K562 (cell line): ENCODE measurements at regions of chr3 and their contacts with region 1.

Region 1: DNA sequence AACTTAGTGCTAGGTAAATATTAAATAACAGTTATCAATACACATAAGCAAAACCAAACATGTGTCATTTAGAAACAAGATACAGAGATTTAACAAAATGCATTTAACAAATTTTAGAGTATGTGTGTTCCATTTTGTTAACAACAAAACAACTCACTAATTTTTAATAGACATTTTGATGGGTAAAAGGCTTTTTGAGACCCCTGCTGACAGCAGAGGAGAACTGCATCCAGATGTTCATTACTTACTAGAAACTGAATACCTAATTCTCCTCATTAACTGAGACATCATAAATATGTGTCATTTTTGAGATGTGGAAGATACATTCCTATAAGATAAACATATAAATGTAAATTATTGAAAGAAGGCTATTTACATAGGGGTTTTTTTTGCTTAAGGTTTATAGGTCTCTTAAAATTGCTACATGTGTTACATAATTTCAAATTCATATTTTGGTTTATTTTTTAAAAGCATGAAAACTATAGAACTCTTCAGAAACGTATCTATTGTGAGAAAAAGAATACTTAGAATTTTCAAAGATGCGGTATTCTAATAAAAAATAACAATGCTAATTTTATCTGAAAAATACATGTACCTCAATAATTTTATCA is 1009.8 kb downstream of the TUSC7 start:
- DNase-seq: peak; percentile 1 to 11 (median 6)
- ATAC-seq: no peak
- H3K4me3 ChIP-seq: no peak overlapping the region
- H3K27ac ChIP-seq: no peak overlapping the region
- H3K4me1 ChIP-seq: no peaks in the 10 kb centered on the region
- H3K27me3 ChIP-seq: no peaks in the 10 kb centered on the region
- CTCF ChIP-seq: peak in 2 of 3 experiments; percentile 5 to 34; a peak in 2 of 6 replicates
- EP300 ChIP-seq: no peak
- POLR2A ChIP-seq: no peak
- RAD21 ChIP-seq: peak in 1 of 2 experiments; percentile 33; a peak in 2 of 4 replicates

Region 2: GRCh38 chr3:116770815-116771450 is 948.5 kb before region 1 on chr3:
- CTCF ChIA-PET with region 1: no interaction called
- POLR2A ChIA-PET with region 1: no interaction called
- in situ Hi-C with region 1: no loop called
- intact Hi-C with region 1: loop called (anchors 5 kb)
- DNase-seq: peak; percentile 29 to 67 (median 35)
- ATAC-seq: peak; percentile 86
- H3K4me3 ChIP-seq: no peak overlapping the region
- H3K27ac ChIP-seq: no peak overlapping the region
- H3K4me1 ChIP-seq: no peaks in the 10 kb centered on the region
- H3K27me3 ChIP-seq: no peaks in the 10 kb centered on the region
- CTCF ChIP-seq: peak; percentile 82 to 99 (median 98)
- EP300 ChIP-seq: no peak
- POLR2A ChIP-seq: no peak
- RAD21 ChIP-seq: peak; percentile 74 to 82